ENCODE measurements at regions of chr2 and their contacts with region 1.

Region 1: GRCh38 chr2:95022309-95023221 is 2.9 kb upstream of the MAL start:
- DNase-seq: peak; percentile 76 to 80 (median 79)
- H3K4me3 ChIP-seq: no peak overlapping the region
- H3K4me3 Mint-ChIP-seq: peak overlapping the region; percentile 57 to 95 (median 74)
- H3K27ac ChIP-seq: peak overlapping the region; percentile 27
- H3K27ac Mint-ChIP-seq: peak overlapping the region; percentile 72 to 98 (median 88)
- H3K4me1 ChIP-seq: peaks cover 47% of the 10 kb centered on the region
- H3K4me1 Mint-ChIP-seq: peaks cover 24 to 59% (median 42%) of the 10 kb centered on the region in 4 donors
- H3K27me3 ChIP-seq: no peaks in the 10 kb centered on the region
- H3K27me3 Mint-ChIP-seq: no peaks in the 10 kb centered on the region

Region 2: DNA sequence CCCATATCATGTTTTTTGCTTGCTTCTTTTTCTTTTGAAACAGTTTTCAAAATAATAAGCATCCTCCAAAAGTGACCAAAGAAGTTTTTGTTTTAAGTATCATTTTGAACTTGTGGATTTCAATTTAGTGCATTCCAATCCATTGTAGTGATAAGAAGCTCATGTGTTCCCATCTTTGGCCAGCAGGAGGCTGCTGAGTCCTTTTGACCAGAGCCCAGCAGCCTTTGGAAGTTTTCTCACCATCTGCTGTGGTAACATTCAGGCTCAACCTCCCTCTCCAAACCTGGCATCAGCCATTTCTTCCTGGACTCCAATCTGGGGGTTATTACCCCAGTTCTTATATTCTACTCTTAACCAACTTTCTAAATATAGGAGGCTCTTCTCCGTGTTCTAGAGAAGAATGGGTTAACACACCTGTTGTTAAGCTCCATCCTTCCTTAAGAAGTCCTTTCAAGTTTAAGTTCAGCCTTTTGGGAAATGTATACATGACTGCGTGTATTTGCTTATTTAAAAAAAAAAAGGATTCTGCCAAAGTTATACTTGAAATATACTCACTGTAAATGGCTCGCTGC is 36.1 kb before region 1 on chr2:
- CTCF ChIA-PET with region 1: no interaction called
- POLR2A ChIA-PET with region 1: no interaction called
- intact Hi-C with region 1: no loop called
- DNase-seq: peak in 4 of 5 donors; percentile 16 to 28 (median 20)
- H3K4me3 ChIP-seq: no peak overlapping the region
- H3K4me3 Mint-ChIP-seq: no peak overlapping the region
- H3K27ac ChIP-seq: no peak overlapping the region
- H3K27ac Mint-ChIP-seq: peak overlapping the region in 2 of 7 donors; percentile 39 to 49
- H3K4me1 ChIP-seq: no peaks in the 10 kb centered on the region
- H3K4me1 Mint-ChIP-seq: no peaks in the 10 kb centered on the region
- H3K27me3 ChIP-seq: no peaks in the 10 kb centered on the region
- H3K27me3 Mint-ChIP-seq: peaks cover 12 to 24% of the 10 kb centered on the region in 2 donors

Region 3: GRCh38 chr2:95043300-95044093 is 20.9 kb after region 1 on chr2:
- CTCF ChIA-PET with region 1: interaction called, 17 read pairs
- POLR2A ChIA-PET with region 1: interaction called, 27 read pairs
- intact Hi-C with region 1: loop called (anchors 2 kb)
- DNase-seq: no peak
- H3K4me3 ChIP-seq: no peak overlapping the region
- H3K4me3 Mint-ChIP-seq: no peak overlapping the region
- H3K27ac ChIP-seq: no peak overlapping the region
- H3K27ac Mint-ChIP-seq: peak overlapping the region; percentile 0 to 82 (median 67)
- H3K4me1 ChIP-seq: peaks cover 26% of the 10 kb centered on the region
- H3K4me1 Mint-ChIP-seq: peaks cover 34 to 81% (median 59%) of the 10 kb centered on the region in 4 donors
- H3K27me3 ChIP-seq: no peaks in the 10 kb centered on the region
- H3K27me3 Mint-ChIP-seq: no peaks in the 10 kb centered on the region

Region 4: GRCh38 chr2:95062242-95063085 is 39.9 kb after region 1 on chr2:
- CTCF ChIA-PET with region 1: interaction called, 61 read pairs
- POLR2A ChIA-PET with region 1: interaction called, 16 read pairs
- intact Hi-C with region 1: no loop called
- DNase-seq: no peak
- H3K4me3 ChIP-seq: no peak overlapping the region
- H3K4me3 Mint-ChIP-seq: peak overlapping the region; percentile 37 to 79 (median 64)
- H3K27ac ChIP-seq: peak overlapping the region; percentile 12
- H3K27ac Mint-ChIP-seq: peak overlapping the region; percentile 54 to 96 (median 89)
- H3K4me1 ChIP-seq: peaks cover 30% of the 10 kb centered on the region
- H3K4me1 Mint-ChIP-seq: peaks cover 17 to 37% (median 29%) of the 10 kb centered on the region in 4 donors
- H3K27me3 ChIP-seq: no peaks in the 10 kb centered on the region
- H3K27me3 Mint-ChIP-seq: no peaks in the 10 kb centered on the region

Region 5: GRCh38 chr2:95115418-95115817 is 92.9 kb after region 1 on chr2:
- CTCF ChIA-PET with region 1: interaction called, 279 read pairs
- POLR2A ChIA-PET with region 1: interaction called, 78 read pairs
- intact Hi-C with region 1: loop called (anchors 1 kb)
- DNase-seq: peak; percentile 66 to 76 (median 69)
- H3K4me3 ChIP-seq: no peak overlapping the region
- H3K4me3 Mint-ChIP-seq: peak overlapping the region in 1 of 8 donors; percentile 28
- H3K27ac ChIP-seq: no peak overlapping the region
- H3K27ac Mint-ChIP-seq: peak overlapping the region in 3 of 7 donors; percentile 66 to 75 (median 69)
- H3K4me1 ChIP-seq: peaks cover 36% of the 10 kb centered on the region
- H3K4me1 Mint-ChIP-seq: peaks cover 34 to 46% (median 36%) of the 10 kb centered on the region in 4 donors
- H3K27me3 ChIP-seq: no peaks in the 10 kb centered on the region
- H3K27me3 Mint-ChIP-seq: no peaks in the 10 kb centered on the region

Region 6: DNA sequence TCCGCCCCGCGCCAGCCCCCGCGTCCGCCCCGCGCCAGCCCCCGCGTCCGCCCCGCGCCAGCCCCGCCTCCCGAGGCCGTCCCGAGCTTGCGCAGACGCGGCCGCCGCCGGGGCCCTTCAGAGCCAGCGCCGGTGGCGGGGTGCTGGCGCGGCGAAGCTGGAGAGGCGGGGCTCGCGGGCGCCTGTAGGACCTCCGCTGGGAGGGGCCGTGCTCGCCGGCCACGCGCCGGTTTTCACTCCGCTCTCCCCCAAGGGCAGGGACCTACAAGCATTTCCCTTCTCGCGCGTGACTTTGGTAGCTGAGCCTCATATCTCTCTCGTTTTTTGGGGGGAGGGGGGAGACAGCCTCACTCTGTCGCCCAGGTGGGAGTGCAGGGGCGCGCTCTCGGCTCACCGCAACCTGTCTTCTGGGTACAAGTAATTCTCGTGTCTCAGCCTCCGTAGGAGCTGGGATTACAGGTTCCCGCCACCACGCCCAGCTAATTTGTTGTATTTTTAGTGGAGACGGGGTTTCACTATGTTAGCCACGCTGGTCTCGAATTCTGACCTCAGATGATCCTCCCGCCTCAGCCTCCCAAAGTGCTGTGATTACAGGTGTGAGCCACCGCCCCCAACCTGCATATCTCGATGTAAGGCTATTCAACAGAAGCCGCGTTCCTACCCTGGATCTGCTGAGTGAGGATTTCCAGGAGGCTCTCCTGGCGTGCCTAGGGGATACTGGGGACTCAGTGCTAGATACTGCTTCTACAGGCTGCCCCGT is 137.3 kb after region 1 on chr2 and contains the start of gene ZNF514:
- CTCF ChIA-PET with region 1: interaction called, 5 read pairs
- POLR2A ChIA-PET with region 1: interaction called, 18 read pairs
- intact Hi-C with region 1: loop called (anchors 1 kb)
- DNase-seq: peak; percentile 70 to 82 (median 74)
- H3K4me3 ChIP-seq: peak within 1 kb of the TSS; percentile 32 to 74
- H3K4me3 Mint-ChIP-seq: peak within 1 kb of the TSS; percentile 86 to 94 (median 90)
- H3K27ac ChIP-seq: peak within 1 kb of the TSS; percentile 57
- H3K27ac Mint-ChIP-seq: peak within 1 kb of the TSS; percentile 77 to 95 (median 89)
- H3K4me1 ChIP-seq: peaks cover 24% of the 10 kb centered on the region
- H3K4me1 Mint-ChIP-seq: peaks cover 5 to 35% (median 13%) of the 10 kb centered on the region in 4 donors
- H3K27me3 ChIP-seq: no peaks in the 10 kb centered on the region
- H3K27me3 Mint-ChIP-seq: no peaks in the 10 kb centered on the region
- total RNA-seq, gene ZNF514: 35.2 to 37.1 TPM

Region 7: DNA sequence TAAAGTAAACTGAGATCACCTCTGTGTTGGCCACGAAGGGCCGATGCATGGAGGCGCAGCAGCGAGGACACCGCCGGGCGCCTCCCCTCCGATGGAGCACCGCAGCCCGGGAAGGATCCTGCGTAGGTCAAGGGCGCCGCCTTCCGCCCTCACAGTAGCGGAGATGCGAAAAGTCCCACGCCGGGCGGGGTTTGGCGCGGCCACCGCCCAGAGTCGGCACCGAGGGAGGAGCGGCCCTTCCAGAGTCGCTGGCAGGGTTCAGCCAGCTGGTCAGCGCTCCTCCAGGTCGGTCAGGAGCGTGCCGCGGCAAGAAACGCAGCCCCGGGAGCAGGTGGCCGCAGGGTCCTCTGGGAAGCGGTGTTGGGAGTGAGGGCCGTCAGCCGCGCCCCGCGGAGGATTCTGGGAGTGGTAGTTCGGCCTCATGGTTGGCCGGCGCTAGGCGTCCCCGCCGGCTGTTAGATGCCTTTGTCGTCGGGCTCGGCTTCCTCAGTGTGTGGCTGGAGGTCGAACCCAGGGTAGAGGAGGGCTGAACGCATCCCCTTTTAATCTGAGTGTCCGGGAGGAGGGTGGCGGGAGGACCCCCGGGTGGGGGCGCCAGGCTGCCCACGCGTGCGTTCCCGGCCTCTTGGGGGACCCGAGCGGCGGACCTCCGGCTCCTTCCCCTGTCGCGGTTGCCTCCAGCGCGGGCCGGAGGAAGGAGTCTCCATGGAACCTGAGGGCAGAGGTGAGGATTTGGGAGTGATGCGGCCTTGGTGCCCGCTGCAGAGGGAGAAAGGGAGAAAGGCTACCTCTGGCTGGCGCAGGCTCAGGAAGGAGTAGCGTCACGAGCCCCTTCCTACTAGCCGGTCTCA is 184.8 kb after region 1 on chr2 and contains the start of gene ZNF892:
- CTCF ChIA-PET with region 1: no interaction called
- POLR2A ChIA-PET with region 1: interaction called, 4 read pairs
- intact Hi-C with region 1: loop called (anchors 1 kb)
- DNase-seq: peak; percentile 68 to 78 (median 69)
- H3K4me3 ChIP-seq: peak within 1 kb of the TSS; percentile 47 to 93
- H3K4me3 Mint-ChIP-seq: peak within 1 kb of the TSS; percentile 93 to 97 (median 96)
- H3K27ac ChIP-seq: peak within 1 kb of the TSS; percentile 70
- H3K27ac Mint-ChIP-seq: peak within 1 kb of the TSS; percentile 71 to 92 (median 90)
- H3K4me1 ChIP-seq: peaks cover 15% of the 10 kb centered on the region
- H3K4me1 Mint-ChIP-seq: peaks cover 11 to 19% (median 15%) of the 10 kb centered on the region in 4 donors
- H3K27me3 ChIP-seq: no peaks in the 10 kb centered on the region
- H3K27me3 Mint-ChIP-seq: no peaks in the 10 kb centered on the region
- total RNA-seq, gene ZNF892: 4.7 to 5.9 TPM

Measured in CD4-positive, alpha-beta memory T cell (primary cell).